ENCODE measurements at regions of chr5 and their contacts with region 1.

Region 1: DNA sequence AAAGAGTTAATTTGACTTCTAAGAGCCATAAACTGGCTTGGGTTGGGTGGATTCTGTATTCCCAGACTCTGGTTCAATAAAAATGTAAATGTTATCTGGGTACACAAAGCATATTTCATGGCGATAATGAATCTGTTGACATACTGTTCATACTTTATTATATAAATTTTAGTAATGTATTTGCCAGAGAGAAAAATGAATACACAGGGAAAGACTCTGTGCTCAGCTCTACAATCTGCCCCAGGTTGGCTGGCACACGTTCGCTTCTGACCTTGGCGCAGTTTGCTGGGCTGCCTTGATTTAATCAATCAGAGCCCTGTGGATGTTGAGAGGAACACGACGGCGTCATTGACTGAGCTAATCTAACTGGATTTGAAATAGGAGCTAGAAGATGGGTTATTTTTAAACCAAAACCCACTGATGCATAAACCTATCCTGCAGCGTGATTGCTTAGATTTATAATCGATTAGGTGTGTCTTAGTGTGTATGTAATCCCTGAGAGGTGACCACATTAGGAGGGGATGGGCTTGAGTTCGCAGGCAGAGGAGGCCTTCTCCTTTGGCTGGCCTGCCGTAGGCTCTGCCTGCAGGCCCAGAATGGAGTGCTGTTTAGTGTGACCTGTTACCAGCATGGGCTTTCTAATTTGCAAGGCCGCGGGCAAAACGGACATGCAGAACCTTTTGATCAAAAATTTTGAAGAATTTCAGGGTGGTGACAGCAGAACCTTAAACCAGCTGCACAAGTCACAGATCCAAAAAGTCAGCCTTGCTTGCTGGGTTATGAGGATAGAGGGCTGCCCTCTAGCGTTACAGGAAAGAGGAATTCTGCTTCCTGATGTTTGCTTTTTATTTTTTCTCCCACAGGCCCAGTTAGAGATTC is 3.9 kb upstream of the ADCY2 start:
- DNase-seq: peak in 1 of 2 donors; percentile 29
- ATAC-seq: peak in 1 of 2 donors; percentile 27
- H3K4me3 ChIP-seq: no peak overlapping the region
- H3K27ac ChIP-seq: peak overlapping the region; percentile 69 to 89 (median 86)
- H3K4me1 ChIP-seq: peaks cover 4 to 16% of the 10 kb centered on the region in 2 donors
- H3K27me3 ChIP-seq: no peaks in the 10 kb centered on the region
- CTCF ChIP-seq: peak; percentile 32 to 72 (median 47)
- POLR2A ChIP-seq: no peak

Region 2: DNA sequence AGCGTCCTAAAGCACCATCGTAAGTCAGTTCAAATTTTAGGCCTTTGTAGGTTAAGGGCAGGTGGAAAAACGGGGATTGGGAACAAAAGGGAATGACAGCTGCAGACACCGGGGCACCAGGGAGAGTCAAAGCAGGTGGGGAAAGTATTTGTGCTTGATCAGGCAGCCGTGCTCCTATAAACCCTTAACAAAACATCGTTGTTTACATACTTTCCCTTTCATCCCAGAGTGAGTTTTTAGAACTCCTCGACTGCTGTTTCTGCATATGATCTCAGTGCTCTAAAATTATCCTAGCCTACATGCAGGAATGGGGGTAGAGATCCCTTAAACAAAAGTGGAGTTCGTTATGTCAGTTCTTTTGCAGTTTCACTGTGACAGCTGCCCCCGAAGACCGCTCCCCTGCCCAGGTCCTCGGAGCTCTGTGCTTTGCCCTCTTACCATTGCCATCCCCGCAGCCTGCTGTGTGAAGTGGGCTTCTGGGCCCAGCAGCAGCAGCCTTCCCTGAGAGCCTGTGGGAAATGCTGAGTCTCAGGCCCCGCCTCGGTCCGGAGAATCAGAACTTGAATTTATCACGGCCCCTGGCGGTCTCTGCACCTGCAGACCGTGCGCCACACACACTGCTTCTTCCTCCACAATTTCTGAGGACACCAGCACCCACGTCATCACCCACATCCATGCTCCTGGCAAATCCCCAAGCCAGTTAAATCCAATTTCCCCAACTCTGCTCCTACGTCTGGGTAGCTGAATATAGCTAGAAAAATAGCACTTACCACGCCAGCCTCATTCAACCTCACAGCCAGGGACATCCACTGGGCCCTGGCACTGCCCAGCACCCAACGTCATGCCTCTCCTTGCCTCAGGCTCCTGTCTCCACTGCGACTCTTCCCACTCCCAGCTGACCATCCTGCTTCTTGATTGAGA is 846.0 kb before region 1 on chr5:
- in situ Hi-C with region 1: no loop called
- intact Hi-C with region 1: loop called (anchors 10 kb)
- DNase-seq: peak in 1 of 2 donors; percentile 47
- ATAC-seq: peak; percentile 63 to 64
- H3K4me3 ChIP-seq: peak overlapping the region in 2 of 4 donors; percentile 11 to 34
- H3K27ac ChIP-seq: peak overlapping the region; percentile 80 to 89 (median 85)
- H3K4me1 ChIP-seq: peaks cover 31 to 53% of the 10 kb centered on the region in 2 donors
- H3K27me3 ChIP-seq: no peaks in the 10 kb centered on the region
- CTCF ChIP-seq: no peak
- POLR2A ChIP-seq: no peak

Region 3: GRCh38 chr5:6820851-6821479 is 571.1 kb before region 1 on chr5:
- in situ Hi-C with region 1: no loop called
- intact Hi-C with region 1: loop called (anchors 5 kb)
- DNase-seq: no peak
- ATAC-seq: no peak
- H3K4me3 ChIP-seq: no peak overlapping the region
- H3K27ac ChIP-seq: no peak overlapping the region
- H3K4me1 ChIP-seq: peaks cover under 1 to 4% of the 10 kb centered on the region in 2 donors
- H3K27me3 ChIP-seq: no peaks in the 10 kb centered on the region
- CTCF ChIP-seq: peak; percentile 16 to 72 (median 45)
- POLR2A ChIP-seq: no peak

Region 4: DNA sequence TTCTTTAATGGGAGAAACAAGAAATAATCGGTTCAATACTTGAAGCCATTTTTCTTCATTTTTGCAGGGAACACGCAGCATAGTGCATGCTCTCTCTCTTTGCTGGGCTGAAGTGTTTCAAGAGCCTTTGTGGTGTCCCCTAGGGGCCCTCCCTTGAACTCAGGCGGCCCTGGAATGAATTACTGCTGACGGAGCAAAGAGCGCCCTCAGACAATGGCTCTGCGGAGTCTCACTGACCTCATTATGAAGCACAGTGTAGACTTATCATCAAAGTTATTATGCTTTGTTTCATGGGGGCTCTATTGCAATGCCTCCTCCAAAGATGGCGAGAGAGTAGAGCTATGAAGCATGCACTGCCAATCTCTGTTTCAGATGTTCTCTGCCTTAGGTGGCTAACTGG is 60.9 kb before region 1 on chr5:
- in situ Hi-C with region 1: no loop called
- intact Hi-C with region 1: no loop called
- DNase-seq: no peak
- ATAC-seq: no peak
- H3K4me3 ChIP-seq: no peak overlapping the region
- H3K27ac ChIP-seq: no peak overlapping the region
- H3K4me1 ChIP-seq: no peaks in the 10 kb centered on the region
- H3K27me3 ChIP-seq: no peaks in the 10 kb centered on the region
- CTCF ChIP-seq: no peak
- POLR2A ChIP-seq: no peak

Region 5: DNA sequence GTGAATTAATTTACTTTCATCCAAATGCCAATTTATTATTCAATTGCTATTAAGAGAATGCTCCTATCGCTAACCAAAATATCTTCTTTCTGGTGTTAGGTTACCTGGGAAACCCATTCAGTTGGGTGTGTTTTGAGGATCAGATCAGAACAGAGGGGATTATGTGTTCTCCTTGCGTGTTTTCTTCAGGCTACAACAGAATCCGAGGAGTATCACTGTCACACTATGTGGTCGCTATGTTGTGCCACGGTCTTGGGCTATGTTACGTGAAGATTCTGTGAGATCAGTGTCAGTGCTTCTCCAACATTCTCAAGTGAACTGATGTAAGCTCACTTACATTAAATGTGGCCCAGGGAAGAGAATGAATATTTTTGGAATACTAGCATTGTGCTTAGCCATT is 42.9 kb after region 1 on chr5:
- in situ Hi-C with region 1: no loop called
- intact Hi-C with region 1: loop called (anchors 1 kb)
- DNase-seq: peak in 1 of 2 donors; percentile 73
- ATAC-seq: peak; percentile 66 to 83
- H3K4me3 ChIP-seq: peak overlapping the region in 3 of 4 donors; percentile 8 to 29 (median 18)
- H3K27ac ChIP-seq: peak overlapping the region; percentile 88 to 94 (median 90)
- H3K4me1 ChIP-seq: peaks cover 55 to 56% of the 10 kb centered on the region in 2 donors
- H3K27me3 ChIP-seq: no peaks in the 10 kb centered on the region
- CTCF ChIP-seq: no peak
- POLR2A ChIP-seq: peak in 1 of 2 donors; percentile 31

Region 6: GRCh38 chr5:7518947-7519560 is 127.0 kb after region 1 on chr5:
- in situ Hi-C with region 1: loop called in 2 of 4 experiments (anchors 10 to 25 kb)
- intact Hi-C with region 1: loop called (anchors 1 kb)
- DNase-seq: peak; percentile 56 to 81
- ATAC-seq: peak; percentile 95 to 97
- H3K4me3 ChIP-seq: no peak overlapping the region
- H3K27ac ChIP-seq: peak overlapping the region; percentile 27 to 59 (median 50)
- H3K4me1 ChIP-seq: peaks cover 4 to 39% of the 10 kb centered on the region in 2 donors
- H3K27me3 ChIP-seq: no peaks in the 10 kb centered on the region
- CTCF ChIP-seq: peak; percentile 68 to 90 (median 82)
- POLR2A ChIP-seq: no peak

Region 7: GRCh38 chr5:7650755-7651154 is 258.7 kb after region 1 on chr5:
- in situ Hi-C with region 1: no loop called
- intact Hi-C with region 1: loop called (anchors 10 kb)
- DNase-seq: peak; percentile 22 to 51
- ATAC-seq: peak; percentile 60 to 92
- H3K4me3 ChIP-seq: no peak overlapping the region
- H3K27ac ChIP-seq: no peak overlapping the region
- H3K4me1 ChIP-seq: peaks cover 24 to 38% of the 10 kb centered on the region in 2 donors
- H3K27me3 ChIP-seq: no peaks in the 10 kb centered on the region
- CTCF ChIP-seq: no peak
- POLR2A ChIP-seq: no peak